ENCODE measurements at regions of chr10 and their contacts with region 1.

Region 1: DNA sequence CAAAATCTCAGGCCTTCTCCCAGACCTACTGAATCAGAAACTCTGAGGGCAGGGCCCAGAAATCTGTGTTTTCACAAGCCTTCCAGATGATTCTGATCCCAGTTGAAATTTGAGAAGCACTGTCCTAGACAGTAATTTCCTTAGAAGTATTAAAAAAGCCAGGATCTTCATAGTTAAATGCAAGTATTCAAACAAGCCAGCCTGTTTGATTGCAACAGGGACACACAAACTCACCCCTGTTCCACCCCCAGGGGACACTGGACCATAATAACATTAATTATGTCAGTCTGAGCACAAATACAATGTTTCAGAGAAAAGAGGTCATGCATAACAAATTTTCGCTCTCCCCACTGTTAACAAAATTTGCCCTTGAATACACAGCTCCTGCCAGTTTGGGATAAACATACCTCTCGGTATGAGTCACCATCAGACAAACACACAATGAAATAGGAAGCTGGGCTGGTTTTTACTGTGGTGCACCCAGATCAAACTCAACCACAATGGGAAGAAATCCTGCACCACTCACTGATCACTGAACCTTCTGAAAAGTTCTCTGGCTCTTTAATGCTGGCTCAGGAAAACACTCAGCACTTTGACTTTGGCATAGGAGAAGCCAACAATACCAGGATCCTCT is 34.3 kb downstream of the ABLIM1 start:
- DNase-seq: peak; percentile 89
- H3K4me3 Mint-ChIP-seq: no peak overlapping the region
- H3K27ac Mint-ChIP-seq: peak overlapping the region; percentile 88
- H3K4me1 Mint-ChIP-seq: peaks cover 42% of the 10 kb centered on the region
- H3K27me3 Mint-ChIP-seq: no peaks in the 10 kb centered on the region
- CTCF ChIP-seq: no peak

Region 2: DNA sequence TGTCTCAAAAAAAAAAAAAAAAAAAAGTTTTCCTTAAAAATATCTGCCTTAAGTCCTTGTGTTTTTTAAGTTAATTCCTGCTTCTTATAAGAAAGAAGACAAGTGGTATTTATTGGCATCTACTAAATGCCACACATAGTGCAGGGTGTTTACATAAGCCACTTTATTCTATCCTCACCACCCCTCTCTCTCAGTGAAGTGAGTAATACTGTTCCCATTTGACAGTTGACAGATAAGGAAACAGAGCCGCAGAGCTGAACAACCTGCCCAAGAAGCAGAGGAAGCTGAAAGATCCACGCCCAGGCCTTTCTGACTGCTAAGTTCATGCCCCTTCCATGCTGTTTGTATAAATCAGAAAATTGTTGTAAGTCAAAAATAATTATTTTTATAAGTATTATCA is 19.8 kb before region 1 on chr10:
- CTCF ChIA-PET with region 1: interaction called, 3 read pairs
- POLR2A ChIA-PET with region 1: interaction called, 11 read pairs
- intact Hi-C with region 1: no loop called
- DNase-seq: no peak
- H3K4me3 Mint-ChIP-seq: no peak overlapping the region
- H3K27ac Mint-ChIP-seq: no peak overlapping the region
- H3K4me1 Mint-ChIP-seq: peaks cover 27% of the 10 kb centered on the region
- H3K27me3 Mint-ChIP-seq: no peaks in the 10 kb centered on the region
- CTCF ChIP-seq: no peak

Region 3: GRCh38 chr10:114663626-114664025 is 39.8 kb after region 1 on chr10:
- CTCF ChIA-PET with region 1: no interaction called
- POLR2A ChIA-PET with region 1: no interaction called
- intact Hi-C with region 1: no loop called
- DNase-seq: no peak
- H3K4me3 Mint-ChIP-seq: no peak overlapping the region
- H3K27ac Mint-ChIP-seq: no peak overlapping the region
- H3K4me1 Mint-ChIP-seq: no peaks in the 10 kb centered on the region
- H3K27me3 Mint-ChIP-seq: no peaks in the 10 kb centered on the region
- CTCF ChIP-seq: no peak